ENCODE measurements at regions of chr11 and their contacts with region 1.

Region 1: DNA sequence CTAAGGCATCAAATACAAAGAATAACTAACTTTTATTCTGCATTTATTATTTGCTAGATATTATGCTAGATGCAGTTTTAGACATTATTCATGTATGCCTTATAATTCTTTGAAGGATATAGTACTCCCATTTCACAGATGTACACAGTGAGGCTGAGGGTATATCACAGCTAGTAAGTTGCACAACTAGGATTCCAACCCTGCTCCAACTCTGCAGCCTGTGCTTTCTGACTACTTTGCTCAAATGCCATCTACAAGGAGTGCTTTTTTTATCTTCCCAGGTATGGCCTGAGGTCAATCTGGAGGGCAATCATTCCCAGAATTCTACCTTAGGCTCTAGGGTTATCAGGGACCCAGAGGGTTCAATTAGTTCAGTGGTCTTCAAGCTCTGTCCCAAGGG is 28.4 kb downstream of the NUP160 start:
- DNase-seq: no peak
- H3K4me3 ChIP-seq: no peak overlapping the region
- H3K27ac ChIP-seq: no peak overlapping the region
- H3K4me1 ChIP-seq: no peaks in the 10 kb centered on the region
- H3K27me3 ChIP-seq: no peaks in the 10 kb centered on the region
- CTCF ChIP-seq: no peak
- EP300 ChIP-seq: no peak
- POLR2A ChIP-seq: no peak

Region 2: GRCh38 chr11:47731475-47731874 is 88.3 kb before region 1 on chr11:
- in situ Hi-C with region 1: no loop called
- intact Hi-C with region 1: loop called (anchors 10 kb)
- DNase-seq: no peak
- H3K4me3 ChIP-seq: no peak overlapping the region
- H3K27ac ChIP-seq: no peak overlapping the region
- H3K4me1 ChIP-seq: no peaks in the 10 kb centered on the region
- H3K27me3 ChIP-seq: no peaks in the 10 kb centered on the region
- CTCF ChIP-seq: no peak
- EP300 ChIP-seq: no peak
- POLR2A ChIP-seq: no peak

Region 3: GRCh38 chr11:48315114-48315513 is 495.4 kb after region 1 on chr11:
- in situ Hi-C with region 1: no loop called
- intact Hi-C with region 1: no loop called
- DNase-seq: no peak
- H3K4me3 ChIP-seq: no peak overlapping the region
- H3K27ac ChIP-seq: no peak overlapping the region
- H3K4me1 ChIP-seq: no peaks in the 10 kb centered on the region
- H3K27me3 ChIP-seq: no peaks in the 10 kb centered on the region
- CTCF ChIP-seq: no peak
- EP300 ChIP-seq: no peak
- POLR2A ChIP-seq: no peak

Measured in transverse colon (tissue), 4 donors.